ENCODE measurements at regions of chr6 and their contacts with region 1.

Region 1: DNA sequence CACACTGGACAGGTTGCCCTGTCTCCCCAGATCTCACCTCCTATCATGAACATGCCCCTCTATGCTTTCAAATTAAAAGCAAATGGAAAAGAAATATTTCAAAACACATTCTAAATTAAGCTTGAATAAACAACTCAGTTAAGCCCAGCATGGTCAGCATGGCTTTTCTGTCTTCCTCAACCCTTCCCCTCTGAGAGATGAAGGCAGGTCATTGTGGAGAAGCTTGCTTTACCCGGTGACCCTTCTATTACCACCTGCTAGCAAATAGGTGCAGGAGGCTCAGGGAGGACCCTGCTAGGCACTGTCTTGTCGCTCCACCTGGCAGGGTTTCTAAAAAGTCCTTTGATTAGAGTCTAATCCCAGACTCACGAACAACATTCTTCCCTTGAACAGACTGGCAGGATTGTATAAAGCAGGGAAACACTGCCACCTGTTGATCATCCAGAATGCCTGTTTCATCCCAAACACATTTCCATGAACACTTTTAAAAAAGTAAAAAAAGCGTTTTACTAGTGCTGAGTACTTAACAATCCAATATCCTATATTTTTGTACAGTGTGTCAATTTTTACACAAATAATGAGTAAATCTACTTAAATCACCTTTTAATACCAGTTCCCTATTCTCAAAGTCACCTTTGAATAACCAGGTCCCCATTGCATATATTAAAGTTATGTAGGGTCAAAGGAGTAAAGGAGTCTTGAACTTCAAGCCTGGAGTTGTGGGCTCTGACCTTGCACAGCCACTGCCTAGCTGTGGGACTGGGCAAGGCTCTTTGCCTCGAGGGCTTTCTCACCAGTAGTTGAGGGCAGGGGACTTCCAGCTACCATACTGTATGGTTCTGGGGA is 75.5 kb downstream of the GPR6 start:
- DNase-seq: peak; percentile 9 to 48
- H3K4me3 ChIP-seq: no peak overlapping the region
- H3K27ac ChIP-seq: no peak overlapping the region
- H3K4me1 ChIP-seq: no peaks in the 10 kb centered on the region
- H3K27me3 ChIP-seq: peaks cover 24% of the 10 kb centered on the region
- CTCF ChIP-seq: peak; percentile 88

Region 2: DNA sequence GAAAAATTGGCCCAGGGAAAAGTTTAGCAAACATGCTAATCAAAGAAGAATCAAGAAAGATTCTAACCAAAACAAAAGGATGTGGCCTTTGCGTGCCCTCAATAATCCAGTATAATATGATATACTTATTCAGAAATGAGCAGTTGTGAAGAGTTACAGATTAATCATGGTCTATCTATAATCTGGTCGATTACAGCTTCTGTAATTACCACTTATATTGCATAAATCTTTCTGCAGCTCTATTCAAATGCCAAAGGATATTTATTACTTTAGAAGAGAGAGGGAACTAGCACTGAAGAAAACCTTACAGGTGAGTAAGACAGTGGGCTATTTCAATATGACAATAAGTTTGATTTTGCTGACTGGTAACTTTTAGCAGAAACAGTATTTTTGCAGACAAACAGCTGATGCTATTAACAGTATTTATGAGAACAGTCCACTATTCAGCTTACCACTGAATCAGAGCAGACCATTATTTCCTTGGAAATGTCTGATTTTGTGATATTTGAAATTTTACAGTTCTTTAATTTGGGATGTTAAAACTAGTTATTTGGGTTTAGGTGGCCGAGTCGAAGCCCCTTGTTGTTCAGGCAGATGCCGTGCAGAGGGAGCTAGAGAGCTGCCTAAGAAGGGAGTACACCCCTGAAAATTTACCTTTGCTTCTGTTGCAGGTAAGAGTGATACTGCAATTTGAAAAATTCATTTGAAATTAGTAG is 866.1 kb before region 1 on chr6:
- CTCF ChIA-PET with region 1: no interaction called
- POLR2A ChIA-PET with region 1: no interaction called
- intact Hi-C with region 1: loop called (anchors 5 kb)
- DNase-seq: peak; percentile 52 to 60
- H3K4me3 ChIP-seq: no peak overlapping the region
- H3K27ac ChIP-seq: no peak overlapping the region
- H3K4me1 ChIP-seq: no peaks in the 10 kb centered on the region
- H3K27me3 ChIP-seq: no peaks in the 10 kb centered on the region
- CTCF ChIP-seq: peak; percentile 98

Region 3: GRCh38 chr6:109526905-109527628 is 526.6 kb before region 1 on chr6:
- CTCF ChIA-PET with region 1: no interaction called
- POLR2A ChIA-PET with region 1: no interaction called
- intact Hi-C with region 1: loop called (anchors 1 kb)
- DNase-seq: peak; percentile 33 to 55
- H3K4me3 ChIP-seq: no peak overlapping the region
- H3K27ac ChIP-seq: no peak overlapping the region
- H3K4me1 ChIP-seq: no peaks in the 10 kb centered on the region
- H3K27me3 ChIP-seq: no peaks in the 10 kb centered on the region
- CTCF ChIP-seq: peak; percentile 80

Region 4: GRCh38 chr6:109705258-109705657 is 348.4 kb before region 1 on chr6:
- CTCF ChIA-PET with region 1: no interaction called
- POLR2A ChIA-PET with region 1: no interaction called
- intact Hi-C with region 1: loop called (anchors 1 kb)
- DNase-seq: peak; percentile 76 to 77
- H3K4me3 ChIP-seq: no peak overlapping the region
- H3K27ac ChIP-seq: no peak overlapping the region
- H3K4me1 ChIP-seq: peaks cover 6% of the 10 kb centered on the region; the same call in 1 of the 2 replicates
- H3K27me3 ChIP-seq: no peaks in the 10 kb centered on the region
- CTCF ChIP-seq: peak; percentile 98

Region 5: DNA sequence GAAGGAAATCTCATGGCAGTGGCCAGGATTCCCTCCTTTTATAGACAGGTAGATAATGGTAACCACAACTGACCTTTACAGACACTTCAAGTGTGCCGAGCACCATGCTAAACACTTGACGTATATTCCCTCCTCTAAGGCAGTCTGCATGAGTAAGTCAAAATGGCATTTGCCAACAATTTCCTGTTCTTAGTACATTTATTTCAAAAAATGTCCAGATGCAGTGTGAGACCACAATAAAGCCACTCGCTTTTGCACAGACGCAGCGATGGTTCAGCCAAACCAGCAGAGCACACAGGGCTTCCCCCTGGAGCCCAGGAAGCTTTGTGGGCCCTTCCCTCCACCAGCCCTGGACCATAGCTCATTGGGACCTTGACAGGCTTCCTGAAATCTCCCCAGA is 92.0 kb before region 1 on chr6:
- CTCF ChIA-PET with region 1: no interaction called
- POLR2A ChIA-PET with region 1: no interaction called
- intact Hi-C with region 1: no loop called
- DNase-seq: peak in 1 of 2 experiments; percentile 90
- H3K4me3 ChIP-seq: no peak overlapping the region
- H3K27ac ChIP-seq: peak overlapping the region; percentile 69
- H3K4me1 ChIP-seq: peaks cover 47% of the 10 kb centered on the region
- H3K27me3 ChIP-seq: no peaks in the 10 kb centered on the region
- CTCF ChIP-seq: no peak

Region 6: DNA sequence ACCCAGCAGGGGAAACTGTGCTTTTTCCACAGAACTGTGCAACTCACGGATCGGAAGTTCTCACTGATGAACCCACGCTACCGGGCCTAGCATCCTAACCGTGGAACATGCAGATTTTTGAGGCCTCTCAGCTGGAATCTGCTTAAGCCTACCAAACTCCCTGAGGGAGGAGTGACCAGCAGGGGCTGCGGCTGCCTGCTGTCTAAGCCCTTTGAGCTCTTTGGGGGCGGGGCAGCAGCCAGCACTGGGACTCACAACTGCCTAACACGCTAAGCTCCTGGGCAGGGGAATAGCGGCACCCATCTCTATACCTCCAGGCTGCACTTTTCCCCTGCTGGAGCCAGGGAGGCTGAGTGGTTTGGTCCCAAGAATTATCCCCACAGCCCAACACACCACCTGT is 324.9 kb after region 1 on chr6:
- CTCF ChIA-PET with region 1: no interaction called
- POLR2A ChIA-PET with region 1: no interaction called
- intact Hi-C with region 1: no loop called
- DNase-seq: no peak
- H3K4me3 ChIP-seq: no peak overlapping the region
- H3K27ac ChIP-seq: no peak overlapping the region
- H3K4me1 ChIP-seq: no peaks in the 10 kb centered on the region
- H3K27me3 ChIP-seq: 0 out of 2 replicates have a peak, but pooled peaks cover 9% of the 10 kb centered on the region
- CTCF ChIP-seq: no peak

Region 7: GRCh38 chr6:110389689-110390382 is 336.2 kb after region 1 on chr6:
- CTCF ChIA-PET with region 1: no interaction called
- POLR2A ChIA-PET with region 1: no interaction called
- intact Hi-C with region 1: loop called (anchors 5 kb)
- DNase-seq: no peak
- H3K4me3 ChIP-seq: no peak overlapping the region
- H3K27ac ChIP-seq: no peak overlapping the region
- H3K4me1 ChIP-seq: no peaks in the 10 kb centered on the region
- H3K27me3 ChIP-seq: no peaks in the 10 kb centered on the region
- CTCF ChIP-seq: no peak